ENCODE measurements at regions of chrX and their contacts with region 1.

Region 1: GRCh38 chrX:85052636-85053343 is 49.1 kb downstream of the APOOL start:
- DNase-seq: no peak
- ATAC-seq: peak; percentile 67
- H3K4me3 ChIP-seq: no peak overlapping the region
- H3K27ac ChIP-seq: no peak overlapping the region
- H3K4me1 ChIP-seq: peaks cover 0 to 3% of the 10 kb centered on the region in 2 donors
- H3K27me3 ChIP-seq: no peaks in the 10 kb centered on the region

Region 2: DNA sequence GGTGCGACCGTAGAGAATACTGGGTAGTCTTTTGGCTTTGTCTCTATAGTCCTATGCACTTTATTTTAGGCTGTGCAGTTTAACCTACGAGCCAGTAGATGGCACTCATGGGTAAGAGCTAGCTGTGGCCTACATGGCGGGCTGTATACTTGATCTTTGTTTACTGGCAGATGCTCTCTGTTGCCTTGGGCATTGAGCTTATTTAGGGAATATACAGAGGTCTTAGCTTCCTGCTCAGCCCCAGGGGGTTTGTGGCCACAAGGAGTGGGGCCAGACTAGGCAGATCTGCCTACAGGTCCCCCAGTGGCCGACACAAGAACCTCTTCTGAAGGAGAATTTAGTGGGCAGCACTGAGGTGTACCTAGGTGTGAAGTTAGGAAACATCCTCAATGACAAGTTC is 323.0 kb before region 1 on chrX:
- intact Hi-C with region 1: loop called in 1 of 2 experiments (anchors 10 kb)
- DNase-seq: no peak
- ATAC-seq: peak; percentile 84
- H3K4me3 ChIP-seq: no peak overlapping the region
- H3K27ac ChIP-seq: no peak overlapping the region
- H3K4me1 ChIP-seq: no peaks in the 10 kb centered on the region
- H3K27me3 ChIP-seq: no peaks in the 10 kb centered on the region

Measured in aorta (tissue), 5 donors.